ENCODE measurements at regions of chr6 and their contacts with region 1.

Region 1: GRCh38 chr6:90393232-90393884 is 96.7 kb upstream of the BACH2 start:
- DNase-seq: peak; percentile 72
- H3K4me3 Mint-ChIP-seq: no peak overlapping the region
- H3K27ac Mint-ChIP-seq: no peak overlapping the region
- H3K4me1 Mint-ChIP-seq: peaks cover 10% of the 10 kb centered on the region
- H3K27me3 Mint-ChIP-seq: no peaks in the 10 kb centered on the region
- CTCF ChIP-seq: peak; percentile 68

Region 2: DNA sequence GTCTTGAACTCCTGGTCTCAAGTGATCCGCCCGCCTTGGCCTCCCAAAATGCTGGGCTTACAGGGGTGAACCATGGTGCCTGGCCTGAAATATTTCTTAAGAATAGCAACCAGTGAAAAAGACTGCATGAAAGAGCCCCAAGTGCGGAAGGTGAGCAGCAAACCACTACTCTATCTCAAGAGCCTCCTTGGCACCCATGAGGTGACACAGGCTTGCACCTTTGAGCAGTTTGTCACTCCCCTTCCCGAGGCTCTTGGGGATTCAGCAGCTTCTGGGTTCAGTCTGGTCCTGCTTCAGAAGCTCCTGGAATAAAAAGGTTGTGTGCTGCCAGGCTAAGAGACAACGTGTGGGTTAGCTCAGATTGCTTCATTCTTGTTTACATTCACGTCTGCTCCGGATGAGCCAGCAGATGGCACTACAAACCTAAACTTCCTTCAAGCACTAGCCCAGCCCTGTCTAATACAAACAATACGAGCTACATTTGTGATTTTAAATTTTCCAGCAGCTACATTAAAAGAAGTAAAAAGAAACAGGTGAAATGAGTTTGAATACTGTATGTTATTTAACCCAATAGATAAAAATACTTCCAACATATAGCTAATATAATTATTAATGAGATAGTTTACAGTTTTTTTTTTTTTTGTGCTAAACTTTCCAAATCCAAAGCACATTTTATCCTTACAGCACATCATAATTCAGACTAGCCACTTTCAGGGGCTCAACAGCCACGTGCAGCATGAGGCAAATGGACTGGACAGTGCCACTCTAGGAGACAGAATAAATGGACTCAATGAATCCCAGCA is 452.9 kb before region 1 on chr6:
- CTCF ChIA-PET with region 1: interaction called, 28 read pairs
- POLR2A ChIA-PET with region 1: no interaction called
- intact Hi-C with region 1: loop called (anchors 1 kb)
- DNase-seq: peak; percentile 80
- H3K4me3 Mint-ChIP-seq: no peak overlapping the region
- H3K27ac Mint-ChIP-seq: no peak overlapping the region
- H3K4me1 Mint-ChIP-seq: peaks cover 12% of the 10 kb centered on the region
- H3K27me3 Mint-ChIP-seq: no peaks in the 10 kb centered on the region
- CTCF ChIP-seq: peak; percentile 67

Region 3: DNA sequence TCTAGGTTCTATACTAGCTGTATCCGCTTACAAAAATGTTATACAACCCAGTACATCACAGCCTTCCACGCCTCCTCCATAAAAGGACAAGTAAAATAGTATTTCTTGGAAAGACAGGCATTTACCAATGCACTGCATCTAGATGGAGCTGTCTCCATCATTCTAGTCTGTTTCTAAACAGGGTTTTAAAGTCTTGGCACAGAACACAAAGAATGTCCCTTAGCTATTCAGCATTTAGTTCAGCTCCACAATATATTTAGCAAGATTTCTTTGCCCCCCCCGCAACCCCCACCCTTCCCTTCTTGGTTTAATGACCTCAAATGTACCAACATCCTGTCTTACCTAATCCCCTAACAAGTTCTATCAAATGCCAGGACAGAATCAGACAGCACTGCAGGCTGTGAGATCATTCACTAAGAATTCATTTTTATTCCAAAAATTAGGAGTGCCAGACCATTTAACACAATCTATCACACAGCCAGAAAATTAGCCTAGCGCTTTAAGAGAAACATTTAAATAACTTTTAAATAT is 295.3 kb before region 1 on chr6:
- CTCF ChIA-PET with region 1: interaction called, 19 read pairs
- POLR2A ChIA-PET with region 1: interaction called, 4 read pairs
- intact Hi-C with region 1: loop called (anchors 1 kb)
- DNase-seq: peak; percentile 97
- H3K4me3 Mint-ChIP-seq: no peak overlapping the region
- H3K27ac Mint-ChIP-seq: peak overlapping the region; percentile 96
- H3K4me1 Mint-ChIP-seq: peaks cover 43% of the 10 kb centered on the region
- H3K27me3 Mint-ChIP-seq: no peaks in the 10 kb centered on the region
- CTCF ChIP-seq: peak; percentile 40

Region 4: GRCh38 chr6:90285611-90286381 is 107.6 kb before region 1 on chr6:
- CTCF ChIA-PET with region 1: interaction called, 27 read pairs
- POLR2A ChIA-PET with region 1: interaction called, 4 read pairs
- intact Hi-C with region 1: no loop called
- DNase-seq: peak; percentile 89
- H3K4me3 Mint-ChIP-seq: no peak overlapping the region
- H3K27ac Mint-ChIP-seq: no peak overlapping the region
- H3K4me1 Mint-ChIP-seq: peaks cover 9% of the 10 kb centered on the region
- H3K27me3 Mint-ChIP-seq: no peaks in the 10 kb centered on the region
- CTCF ChIP-seq: no peak

Region 5: DNA sequence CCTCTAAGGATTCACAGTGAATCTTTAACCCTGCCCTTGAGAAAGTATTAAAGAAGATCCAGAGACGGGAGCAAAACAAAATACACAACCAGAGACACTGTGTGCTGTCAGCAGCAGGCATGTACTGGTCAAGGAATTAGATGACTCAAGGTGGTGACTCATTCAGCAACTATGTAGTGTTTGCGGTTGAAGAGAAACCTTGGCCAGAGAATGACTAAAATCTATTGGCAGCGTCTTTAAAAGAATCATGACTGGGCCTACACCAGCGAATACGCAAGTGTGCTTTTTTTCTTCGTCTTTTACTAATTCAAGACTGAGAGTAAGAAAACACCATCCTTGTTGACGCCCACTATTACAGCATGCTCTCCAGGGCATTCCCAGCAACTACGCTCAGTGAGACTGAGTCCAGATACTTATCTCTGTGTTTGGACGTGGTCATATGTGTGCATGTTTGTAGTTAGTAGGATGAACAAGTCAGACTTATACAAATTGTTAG is 24.3 kb before region 1 on chr6:
- CTCF ChIA-PET with region 1: interaction called, 29 read pairs
- POLR2A ChIA-PET with region 1: interaction called, 4 read pairs
- intact Hi-C with region 1: no loop called
- DNase-seq: peak; percentile 99
- H3K4me3 Mint-ChIP-seq: peak overlapping the region; percentile 12
- H3K27ac Mint-ChIP-seq: peak overlapping the region; percentile 68
- H3K4me1 Mint-ChIP-seq: peaks cover 11% of the 10 kb centered on the region
- H3K27me3 Mint-ChIP-seq: no peaks in the 10 kb centered on the region
- CTCF ChIP-seq: no peak

Region 6: DNA sequence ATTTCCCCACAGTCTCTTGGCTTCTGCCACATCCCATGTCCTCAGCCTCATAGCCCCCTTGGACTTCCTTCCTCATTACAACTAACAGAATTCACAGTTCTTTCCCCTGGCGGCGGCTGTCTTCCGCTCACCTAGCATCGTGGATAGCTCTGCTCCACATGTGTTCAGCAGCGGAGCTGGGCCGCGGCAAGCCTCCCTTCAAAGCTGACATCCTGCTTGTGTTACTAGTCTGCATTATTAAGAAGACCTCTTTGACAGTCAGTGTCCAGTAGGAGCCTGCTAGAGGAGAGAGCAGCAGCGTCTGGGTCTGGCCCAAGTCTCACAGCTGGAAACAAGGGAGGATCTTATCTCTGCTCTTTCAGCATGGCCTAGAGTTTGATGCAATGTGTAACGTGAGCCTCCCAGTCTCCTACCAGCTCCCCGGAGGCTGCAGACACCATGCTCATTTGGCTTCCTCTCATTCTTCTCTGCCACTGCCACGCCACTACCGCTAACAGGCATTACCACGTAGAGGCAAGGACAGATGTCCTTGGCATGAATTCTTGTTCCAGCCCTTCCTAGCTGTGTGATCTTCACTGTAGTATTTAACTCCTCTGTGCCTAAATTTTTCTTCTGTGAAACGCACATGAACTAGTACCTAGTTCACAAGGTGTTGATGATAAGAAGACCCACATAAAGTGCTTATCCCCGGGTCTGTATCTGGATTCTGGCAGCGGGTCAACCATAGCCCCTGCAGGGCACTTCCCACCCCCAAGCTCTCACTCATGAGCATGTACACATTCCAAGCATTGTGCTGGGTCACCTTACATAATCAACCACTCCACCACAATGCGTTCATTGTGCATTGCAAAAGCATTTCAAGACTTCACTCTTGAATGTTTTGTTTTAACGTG is 10.4 kb after region 1 on chr6:
- CTCF ChIA-PET with region 1: interaction called, 25 read pairs
- POLR2A ChIA-PET with region 1: interaction called, 3 read pairs
- intact Hi-C with region 1: no loop called
- DNase-seq: peak; percentile 78
- H3K4me3 Mint-ChIP-seq: no peak overlapping the region
- H3K27ac Mint-ChIP-seq: no peak overlapping the region
- H3K4me1 Mint-ChIP-seq: peaks cover 18% of the 10 kb centered on the region
- H3K27me3 Mint-ChIP-seq: no peaks in the 10 kb centered on the region
- CTCF ChIP-seq: no peak

Region 7: DNA sequence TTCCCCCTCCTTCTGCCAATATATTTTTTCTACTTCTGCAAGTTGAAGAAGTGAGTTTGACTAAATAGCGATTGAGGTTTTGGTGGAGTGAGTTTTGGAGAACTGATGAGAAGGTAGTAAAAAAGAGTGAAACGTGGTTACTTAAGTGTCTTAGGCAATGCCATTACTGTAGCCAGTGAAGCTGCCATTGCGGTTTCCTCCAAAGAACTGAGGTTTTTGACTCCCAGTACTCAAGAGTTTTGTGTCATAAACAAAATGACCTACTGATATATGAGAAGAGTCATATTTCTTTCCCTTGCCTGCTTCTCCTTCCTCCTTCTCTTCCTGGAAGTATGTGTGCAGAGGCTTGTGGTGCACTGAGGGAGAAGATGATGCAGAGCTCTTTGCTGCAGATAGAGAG is 748.0 kb after region 1 on chr6:
- CTCF ChIA-PET with region 1: no interaction called
- POLR2A ChIA-PET with region 1: no interaction called
- intact Hi-C with region 1: no loop called
- DNase-seq: no peak
- H3K4me3 Mint-ChIP-seq: no peak overlapping the region
- H3K27ac Mint-ChIP-seq: no peak overlapping the region
- H3K4me1 Mint-ChIP-seq: no peaks in the 10 kb centered on the region
- H3K27me3 Mint-ChIP-seq: peaks cover 14% of the 10 kb centered on the region
- CTCF ChIP-seq: no peak

Measured in MCF 10A (cell line).